ENCODE measurements at regions of chr17 and their contacts with region 1.

Region 1: DNA sequence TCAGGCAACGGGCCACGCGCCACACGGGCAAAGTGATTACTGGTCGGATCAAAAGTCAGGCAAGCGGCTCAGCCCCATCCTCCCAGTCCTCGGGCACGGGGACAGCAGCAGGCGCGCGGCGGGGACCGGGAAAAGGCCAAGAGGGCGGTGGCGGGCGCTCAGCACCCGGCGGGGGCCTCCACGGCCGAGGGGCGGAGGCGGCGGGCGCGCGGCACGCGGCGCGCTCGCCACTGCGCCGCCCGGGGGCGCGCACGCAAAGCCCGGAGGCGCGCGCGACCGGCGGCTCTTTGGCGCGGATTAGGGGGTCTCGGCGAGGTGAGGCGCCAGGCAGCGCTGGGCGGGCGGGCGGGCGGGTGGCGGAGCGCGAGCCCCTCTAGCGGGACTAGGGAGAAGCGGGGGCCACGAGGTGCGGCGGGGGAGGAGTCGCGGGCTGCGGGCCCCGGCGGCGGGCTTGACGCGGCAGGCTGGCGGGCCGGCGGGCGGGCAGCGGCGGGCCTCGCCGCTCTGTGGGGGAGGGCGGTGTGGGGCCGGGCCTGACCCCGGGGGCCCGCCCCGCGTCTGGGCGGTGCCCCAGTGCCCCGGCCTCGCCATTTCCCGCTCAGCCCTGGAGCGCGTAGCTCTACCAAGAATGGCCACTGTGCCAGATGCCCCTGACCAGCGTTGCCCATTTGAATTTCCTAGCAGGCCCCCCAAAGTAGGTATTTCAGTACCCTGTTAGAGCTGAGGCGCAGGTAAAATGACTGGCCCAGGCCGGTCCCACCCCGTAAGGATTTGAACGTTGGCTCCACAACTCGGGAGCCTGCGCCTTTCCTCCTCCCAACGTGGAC is at the starts of genes ACACA and TADA2A:
- DNase-seq: peak; percentile 75
- H3K4me3 Mint-ChIP-seq: peak within 1 kb of the TSS; percentile 99
- H3K27ac Mint-ChIP-seq: peak within 1 kb of the TSS; percentile 98
- H3K4me1 Mint-ChIP-seq: peaks cover 51% of the 10 kb centered on the region
- H3K27me3 Mint-ChIP-seq: no peaks in the 10 kb centered on the region
- total RNA-seq, gene ACACA: 110 and 122 TPM in 2 replicates
- total RNA-seq, gene TADA2A: 39.7 and 41.9 TPM in 2 replicates

Region 2: DNA sequence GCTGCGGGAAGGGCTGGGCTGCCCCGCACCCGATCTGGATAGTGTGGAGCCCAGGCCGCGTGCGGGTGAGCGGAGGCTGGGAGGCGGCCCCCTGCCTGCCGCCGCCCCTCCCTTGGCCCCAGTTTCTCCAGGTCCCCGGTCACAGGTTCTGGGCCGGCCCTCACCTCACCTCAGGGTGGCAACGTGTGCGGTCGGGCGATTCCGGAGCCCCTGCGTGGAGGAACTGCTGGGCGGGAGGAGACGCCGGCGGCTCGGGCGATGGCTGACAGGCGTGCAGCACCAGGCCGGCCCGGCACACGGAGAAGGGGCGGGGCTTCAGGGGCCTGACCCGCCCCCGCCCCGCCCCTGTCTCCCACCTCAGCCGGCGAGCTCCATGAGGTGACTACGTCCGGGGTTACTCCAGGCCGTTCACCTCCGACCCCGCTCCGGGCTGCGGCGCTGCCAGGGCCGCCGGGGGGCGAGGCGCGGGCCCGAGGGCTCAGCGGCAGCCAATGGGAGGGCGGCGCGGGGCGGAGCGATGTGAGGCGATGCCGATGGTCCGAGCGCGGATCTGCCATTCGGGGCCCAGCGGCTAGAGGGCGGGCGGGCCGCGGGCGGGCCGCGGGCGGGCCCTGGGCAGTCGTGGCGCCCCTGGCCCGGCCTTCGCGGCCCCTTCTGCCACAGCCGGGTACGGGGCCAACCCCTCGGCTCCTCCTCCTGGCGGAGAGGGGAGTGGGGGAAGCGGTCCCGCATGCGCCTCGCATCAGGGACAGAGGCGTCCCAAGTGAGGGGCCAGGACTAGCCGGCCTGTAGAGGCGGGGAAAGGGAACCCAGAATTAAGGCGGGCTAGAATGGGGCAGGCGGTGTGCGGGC is 47.8 kb before region 1 on chr17:
- intact Hi-C with region 1: loop called (anchors 1 kb)
- DNase-seq: peak; percentile 90
- H3K4me3 Mint-ChIP-seq: peak overlapping the region; percentile 98
- H3K27ac Mint-ChIP-seq: peak overlapping the region; percentile 92
- H3K4me1 Mint-ChIP-seq: peaks cover 32% of the 10 kb centered on the region
- H3K27me3 Mint-ChIP-seq: no peaks in the 10 kb centered on the region

Region 3: DNA sequence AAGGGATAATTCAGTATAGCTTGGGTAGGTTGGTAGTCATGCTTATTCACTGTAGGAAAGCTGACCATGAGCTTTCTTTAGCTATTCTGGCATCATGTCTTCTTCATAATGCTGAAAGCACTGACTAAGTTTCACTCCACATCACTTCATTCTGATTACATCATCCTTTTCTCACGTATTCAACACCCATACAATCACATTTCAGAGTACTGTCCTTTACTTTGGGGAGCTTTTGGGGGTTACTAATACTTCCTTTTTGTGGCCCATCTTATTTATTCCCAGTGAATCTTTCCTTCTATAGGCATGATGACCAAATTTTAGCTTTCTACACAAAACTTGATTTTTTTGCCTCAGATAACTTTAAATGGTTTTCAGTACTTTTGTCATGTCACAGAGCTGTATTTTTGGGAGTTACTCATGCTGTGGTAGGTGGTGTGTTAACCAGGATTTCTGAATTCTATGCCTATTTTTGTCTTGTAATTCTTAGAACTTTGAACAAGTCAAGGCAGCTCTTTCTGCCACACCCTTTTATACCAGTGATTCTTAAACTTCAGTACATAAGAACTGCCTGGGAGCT is 23.3 kb after region 1 on chr17:
- intact Hi-C with region 1: loop called (anchors 1 kb)
- DNase-seq: no peak
- H3K4me3 Mint-ChIP-seq: peak overlapping the region; percentile 19
- H3K27ac Mint-ChIP-seq: peak overlapping the region; percentile 95
- H3K4me1 Mint-ChIP-seq: peaks cover 37% of the 10 kb centered on the region
- H3K27me3 Mint-ChIP-seq: no peaks in the 10 kb centered on the region

Region 4: GRCh38 chr17:37489197-37490001 is 82.6 kb after region 1 on chr17 and contains the start of gene DUSP14:
- intact Hi-C with region 1: loop called (anchors 1 kb)
- DNase-seq: peak; percentile 74
- H3K4me3 Mint-ChIP-seq: peak within 1 kb of the TSS; percentile 94
- H3K27ac Mint-ChIP-seq: peak within 1 kb of the TSS; percentile 97
- H3K4me1 Mint-ChIP-seq: peaks cover 50% of the 10 kb centered on the region
- H3K27me3 Mint-ChIP-seq: peaks cover 3% of the 10 kb centered on the region
- total RNA-seq, gene DUSP14: 21.4 and 22.3 TPM in 2 replicates

Region 5: DNA sequence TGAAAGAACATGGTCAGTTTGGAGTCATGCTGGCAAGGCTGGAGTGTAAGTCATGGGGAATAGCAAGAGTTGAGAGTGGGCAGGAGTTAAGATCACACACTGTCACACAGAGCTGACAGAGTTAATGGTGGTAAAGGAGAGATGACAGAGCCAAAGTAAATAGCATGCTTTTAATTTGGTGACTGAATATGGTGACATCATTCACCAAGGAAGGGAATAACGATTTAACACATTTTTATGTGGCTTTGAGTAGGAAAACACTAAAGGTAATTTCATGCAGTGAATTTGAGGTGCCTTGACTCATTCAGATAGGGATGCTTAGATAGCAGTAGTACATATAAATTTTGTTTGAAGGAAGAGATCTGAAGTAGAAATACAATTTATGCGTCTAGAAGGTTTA is 160.3 kb after region 1 on chr17:
- intact Hi-C with region 1: no loop called
- DNase-seq: no peak
- H3K4me3 Mint-ChIP-seq: no peak overlapping the region
- H3K27ac Mint-ChIP-seq: no peak overlapping the region
- H3K4me1 Mint-ChIP-seq: peaks cover 7% of the 10 kb centered on the region
- H3K27me3 Mint-ChIP-seq: no peaks in the 10 kb centered on the region